AG04449 (cell line): ENCODE measurements at regions of chr15 and their contacts with region 1.

Region 1: GRCh38 chr15:39756806-39757522 is 25.7 kb downstream of the FSIP1 start:
- DNase-seq: peak; percentile 36
- H3K4me3 ChIP-seq: no peak overlapping the region
- CTCF ChIP-seq: peak; percentile 28

Region 2: GRCh38 chr15:39602143-39602542 is 154.8 kb before region 1 on chr15:
- CTCF ChIA-PET with region 1: interaction called, 72 read pairs
- POLR2A ChIA-PET with region 1: interaction called, 7 read pairs
- DNase-seq: no peak
- H3K4me3 ChIP-seq: no peak overlapping the region
- CTCF ChIP-seq: no peak

Region 3: DNA sequence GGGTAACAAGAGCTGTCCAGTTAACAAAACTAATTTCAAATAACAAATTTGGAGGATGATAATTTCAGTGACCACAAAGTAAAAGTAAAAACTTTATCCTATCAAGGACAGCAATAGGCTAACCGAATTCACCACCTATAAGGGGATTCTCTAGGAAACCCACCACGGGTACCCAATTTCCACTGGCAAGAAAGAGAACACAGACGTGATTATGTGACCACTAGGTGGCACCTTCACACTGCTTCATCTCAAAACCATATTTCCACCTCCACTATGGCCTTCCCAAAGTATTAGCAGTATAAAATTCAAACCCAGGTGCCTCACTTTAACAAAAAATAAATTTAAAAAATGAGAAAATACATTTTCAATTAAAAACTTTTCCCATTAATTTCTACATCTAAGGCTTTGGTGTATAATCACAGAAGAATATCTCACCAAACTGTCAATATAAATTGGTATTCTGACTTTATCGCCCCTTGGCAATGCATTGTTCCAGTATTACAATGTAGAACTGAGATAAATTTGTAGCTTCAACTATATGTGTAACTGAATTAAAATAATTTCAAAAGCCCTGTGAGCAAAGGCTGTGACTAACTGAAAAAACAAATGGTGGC is 70.9 kb before region 1 on chr15:
- CTCF ChIA-PET with region 1: interaction called, 288 read pairs
- POLR2A ChIA-PET with region 1: no interaction called
- DNase-seq: no peak
- H3K4me3 ChIP-seq: no peak overlapping the region
- CTCF ChIP-seq: peak; percentile 69

Region 4: DNA sequence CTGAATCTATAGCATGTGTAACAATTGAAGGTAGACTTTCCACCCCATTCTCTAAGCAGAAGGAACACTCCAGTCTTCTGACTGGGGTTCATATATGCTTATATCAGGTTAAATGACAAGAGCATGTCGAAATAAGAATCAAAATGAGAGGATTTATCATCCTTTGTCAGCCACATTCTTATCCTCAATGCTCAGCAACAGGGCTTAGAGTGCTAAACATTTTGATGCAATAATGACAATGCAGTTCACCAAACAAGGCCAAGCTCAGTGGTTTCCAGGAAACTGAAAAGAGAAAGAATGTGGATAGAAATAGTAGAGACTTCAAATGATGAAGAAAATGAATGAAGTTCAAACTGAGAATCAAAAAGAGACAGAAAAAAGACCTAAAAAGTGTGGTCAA is 52.3 kb before region 1 on chr15:
- CTCF ChIA-PET with region 1: interaction called, 13 read pairs
- POLR2A ChIA-PET with region 1: no interaction called
- DNase-seq: no peak
- H3K4me3 ChIP-seq: no peak overlapping the region
- CTCF ChIP-seq: no peak

Region 5: GRCh38 chr15:39736412-39737197 is 20.4 kb before region 1 on chr15:
- CTCF ChIA-PET with region 1: interaction called, 34 read pairs
- POLR2A ChIA-PET with region 1: interaction called, 3 read pairs
- DNase-seq: no peak
- H3K4me3 ChIP-seq: no peak overlapping the region
- CTCF ChIP-seq: no peak